B cell (primary cell): ENCODE measurements at regions of chr21 and their contacts with region 1.

Region 1: GRCh38 chr21:43659136-43660000 is at the starts of genes HSF2BP and RRP1B:
- DNase-seq: peak; percentile 90
- ATAC-seq: peak; percentile 93
- H3K4me3 ChIP-seq: peak within 1 kb of the TSS; percentile 72 to 94 (median 79)
- H3K4me3 Mint-ChIP-seq: peak within 1 kb of the TSS; percentile 95
- H3K27ac ChIP-seq: peak within 1 kb of the TSS; percentile 69 to 76
- H3K27ac Mint-ChIP-seq: peak within 1 kb of the TSS; percentile 94
- H3K4me1 ChIP-seq: peaks cover 28 to 29% of the 10 kb centered on the region in 2 donors
- H3K4me1 Mint-ChIP-seq: peaks cover 33% of the 10 kb centered on the region
- H3K27me3 ChIP-seq: no peaks in the 10 kb centered on the region
- H3K27me3 Mint-ChIP-seq: no peaks in the 10 kb centered on the region
- CTCF ChIP-seq: no peak
- total RNA-seq, gene HSF2BP: 0.49 and 0.83 TPM in 2 replicates
- total RNA-seq, gene RRP1B: 22.4 and 22.7 TPM in 2 replicates

Region 2: DNA sequence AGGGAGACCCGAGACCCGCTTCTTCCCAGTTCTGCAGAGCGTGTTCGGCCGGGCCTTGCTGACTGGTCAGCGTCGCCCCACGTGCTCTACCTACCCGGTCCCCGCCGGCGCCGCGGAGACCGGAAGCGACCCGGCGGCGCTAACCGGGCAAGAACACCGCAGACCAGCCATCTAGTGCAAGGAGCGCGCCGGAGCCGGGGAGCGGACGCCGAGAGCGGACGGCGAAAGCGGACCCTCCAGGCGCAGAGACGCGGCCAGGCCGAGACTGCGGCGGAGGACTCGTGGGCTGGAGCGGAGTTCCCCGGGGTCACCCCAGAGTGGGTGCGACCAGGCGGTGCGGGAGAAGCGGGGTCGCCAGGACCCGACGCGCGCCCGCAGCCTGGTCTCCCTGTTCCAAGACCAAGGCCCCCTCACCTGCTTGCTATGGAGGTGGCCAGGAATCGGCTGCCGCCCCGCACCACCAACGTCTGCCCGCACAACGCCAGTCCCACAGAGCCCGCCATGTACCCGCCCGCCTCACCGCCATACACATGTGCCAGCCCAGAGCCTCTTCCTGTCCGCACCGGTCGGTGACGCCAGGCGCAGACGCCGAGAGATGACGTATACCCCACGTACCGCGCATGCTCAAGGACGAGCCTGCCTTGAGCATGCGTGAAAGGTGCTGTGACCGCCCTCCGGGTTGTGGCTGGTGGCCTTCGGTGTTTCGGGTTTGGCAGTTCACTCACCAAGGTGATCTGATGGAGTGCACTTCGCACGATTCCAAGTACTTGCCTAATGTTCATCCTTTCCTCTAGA is 780.2 kb before region 1 on chr21 and contains the start of gene WDR4:
- CTCF ChIA-PET with region 1: no interaction called
- POLR2A ChIA-PET with region 1: no interaction called
- intact Hi-C with region 1: loop called (anchors 1 kb)
- DNase-seq: peak; percentile 99
- ATAC-seq: peak; percentile 90
- H3K4me3 ChIP-seq: peak within 1 kb of the TSS; percentile 78 to 96 (median 82)
- H3K4me3 Mint-ChIP-seq: peak within 1 kb of the TSS; percentile 96
- H3K27ac ChIP-seq: peak within 1 kb of the TSS; percentile 83 to 97
- H3K27ac Mint-ChIP-seq: peak within 1 kb of the TSS; percentile 99
- H3K4me1 ChIP-seq: peaks cover 16 to 20% of the 10 kb centered on the region in 2 donors
- H3K4me1 Mint-ChIP-seq: peaks cover 30% of the 10 kb centered on the region
- H3K27me3 ChIP-seq: no peaks in the 10 kb centered on the region
- H3K27me3 Mint-ChIP-seq: no peaks in the 10 kb centered on the region
- CTCF ChIP-seq: no peak
- total RNA-seq, gene WDR4: 40.1 TPM in 2 replicates

Region 3: GRCh38 chr21:43585924-43586424 is 73.4 kb before region 1 on chr21:
- CTCF ChIA-PET with region 1: no interaction called
- POLR2A ChIA-PET with region 1: no interaction called
- intact Hi-C with region 1: no loop called
- DNase-seq: no peak
- ATAC-seq: no peak
- H3K4me3 ChIP-seq: no peak overlapping the region
- H3K4me3 Mint-ChIP-seq: no peak overlapping the region
- H3K27ac ChIP-seq: no peak overlapping the region
- H3K27ac Mint-ChIP-seq: no peak overlapping the region
- H3K4me1 ChIP-seq: no peaks in the 10 kb centered on the region
- H3K4me1 Mint-ChIP-seq: no peaks in the 10 kb centered on the region
- H3K27me3 ChIP-seq: no peaks in the 10 kb centered on the region
- H3K27me3 Mint-ChIP-seq: peaks cover 7% of the 10 kb centered on the region
- CTCF ChIP-seq: no peak

Region 4: DNA sequence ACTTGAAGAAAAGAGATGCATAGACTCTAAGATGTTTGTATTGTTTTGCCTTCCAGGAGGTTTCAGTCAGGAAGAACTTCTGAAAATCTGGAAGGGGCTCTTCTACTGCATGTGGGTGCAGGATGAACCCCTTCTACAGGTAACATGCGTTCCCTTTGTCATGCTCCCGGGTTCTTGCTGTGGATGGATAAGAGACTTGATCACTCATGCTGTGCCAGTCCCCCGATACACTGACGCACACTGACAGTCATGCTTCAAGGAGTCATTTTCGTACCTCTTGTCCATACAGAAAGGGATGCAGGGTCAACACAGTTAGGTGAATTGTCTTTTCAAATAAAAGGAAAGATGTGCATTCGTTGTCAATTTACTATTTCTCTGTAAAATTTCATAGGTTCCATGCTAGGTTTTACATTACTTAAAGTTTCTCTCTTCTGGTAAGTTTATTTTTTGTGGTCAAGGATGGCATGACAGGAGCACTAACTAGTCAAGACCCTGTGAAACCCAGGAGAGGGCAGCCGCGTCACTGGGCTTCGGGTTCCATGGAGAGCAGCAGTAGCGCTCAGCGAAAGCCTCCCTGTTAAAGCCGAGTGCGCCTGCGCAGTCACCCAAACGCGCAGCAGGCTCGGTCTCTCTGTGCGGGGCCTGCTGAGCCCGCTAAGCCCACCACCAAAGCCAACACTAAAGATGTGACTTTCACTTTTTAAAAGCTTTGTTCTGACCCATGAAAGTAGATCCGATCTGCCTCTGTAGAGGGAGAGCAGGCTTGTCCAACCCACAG is 10.6 kb after region 1 on chr21:
- CTCF ChIA-PET with region 1: no interaction called
- POLR2A ChIA-PET with region 1: no interaction called
- intact Hi-C with region 1: no loop called
- DNase-seq: no peak
- ATAC-seq: no peak
- H3K4me3 ChIP-seq: no peak overlapping the region
- H3K4me3 Mint-ChIP-seq: no peak overlapping the region
- H3K27ac ChIP-seq: no peak overlapping the region
- H3K27ac Mint-ChIP-seq: no peak overlapping the region
- H3K4me1 ChIP-seq: no peaks in the 10 kb centered on the region
- H3K4me1 Mint-ChIP-seq: peaks cover 11% of the 10 kb centered on the region
- H3K27me3 ChIP-seq: no peaks in the 10 kb centered on the region
- H3K27me3 Mint-ChIP-seq: no peaks in the 10 kb centered on the region
- CTCF ChIP-seq: no peak

Region 5: GRCh38 chr21:43687566-43688286 is 28.4 kb after region 1 on chr21:
- CTCF ChIA-PET with region 1: interaction called, 3 read pairs
- POLR2A ChIA-PET with region 1: no interaction called
- intact Hi-C with region 1: loop called (anchors 1 kb)
- DNase-seq: peak; percentile 73
- ATAC-seq: peak; percentile 91
- H3K4me3 ChIP-seq: no peak overlapping the region
- H3K4me3 Mint-ChIP-seq: peak overlapping the region; percentile 29
- H3K27ac ChIP-seq: peak overlapping the region; percentile 52 to 67
- H3K27ac Mint-ChIP-seq: peak overlapping the region; percentile 80
- H3K4me1 ChIP-seq: peaks cover 13 to 19% of the 10 kb centered on the region in 2 donors
- H3K4me1 Mint-ChIP-seq: peaks cover 14% of the 10 kb centered on the region
- H3K27me3 ChIP-seq: no peaks in the 10 kb centered on the region
- H3K27me3 Mint-ChIP-seq: no peaks in the 10 kb centered on the region
- CTCF ChIP-seq: no peak

Region 6: DNA sequence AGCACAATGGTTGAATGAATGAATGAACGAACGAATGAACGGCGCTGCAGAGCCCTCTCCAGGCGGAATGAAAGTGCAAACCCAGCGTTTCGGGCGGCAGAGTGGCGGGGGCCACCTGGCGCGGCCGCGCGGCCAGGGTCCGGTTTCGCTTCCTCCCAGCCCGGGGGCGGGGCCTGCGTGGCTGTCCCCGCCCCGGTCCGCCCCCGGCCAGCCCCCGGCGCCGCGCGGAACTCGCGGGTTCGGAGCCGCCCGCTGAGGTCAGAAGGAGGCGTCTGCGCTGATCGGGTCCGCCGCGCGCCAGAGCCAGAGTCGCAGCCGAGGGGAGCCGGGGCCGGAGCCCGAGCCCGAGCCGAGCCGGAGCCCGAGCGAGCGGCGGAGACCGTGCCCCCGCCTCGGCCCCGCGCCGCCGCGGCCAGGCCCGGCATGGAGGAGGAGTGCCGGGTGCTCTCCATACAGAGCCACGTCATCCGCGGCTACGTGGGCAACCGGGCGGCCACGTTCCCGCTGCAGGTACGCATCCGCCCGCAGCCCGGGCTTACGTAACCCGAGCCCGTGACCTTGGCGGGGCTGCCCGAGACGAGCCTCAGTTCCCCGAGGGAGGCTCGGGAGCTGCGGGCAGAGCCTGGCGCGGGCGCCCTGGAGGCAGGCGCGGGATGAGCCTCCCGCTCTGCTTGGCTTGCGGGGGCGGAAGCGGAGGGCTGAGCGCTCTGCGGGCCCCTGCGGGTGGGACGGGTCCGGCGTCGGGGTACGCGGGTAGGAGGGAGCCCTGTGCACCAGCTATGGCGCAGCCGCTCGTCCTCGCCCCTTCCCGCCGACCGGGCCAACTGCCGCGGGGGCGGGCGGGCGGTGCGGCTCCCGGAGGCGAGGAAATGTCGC is 59.7 kb after region 1 on chr21 and contains the start of gene PDXK:
- CTCF ChIA-PET with region 1: no interaction called
- POLR2A ChIA-PET with region 1: interaction called, 5 read pairs
- intact Hi-C with region 1: loop called (anchors 1 kb)
- DNase-seq: peak; percentile 95
- ATAC-seq: peak; percentile 85
- H3K4me3 ChIP-seq: peak within 1 kb of the TSS; percentile 13 to 88 (median 75)
- H3K4me3 Mint-ChIP-seq: peak within 1 kb of the TSS; percentile 86
- H3K27ac ChIP-seq: peak within 1 kb of the TSS; percentile 55 to 87
- H3K27ac Mint-ChIP-seq: peak within 1 kb of the TSS; percentile 81
- H3K4me1 ChIP-seq: peaks cover 35 to 56% of the 10 kb centered on the region in 2 donors
- H3K4me1 Mint-ChIP-seq: peaks cover 53% of the 10 kb centered on the region
- H3K27me3 ChIP-seq: peaks cover 0 to 23% (median 4%) of the 10 kb centered on the region in 4 experiments
- H3K27me3 Mint-ChIP-seq: no peaks in the 10 kb centered on the region
- CTCF ChIP-seq: peak; percentile 36
- total RNA-seq, gene PDXK: 102 and 108 TPM in 2 replicates